Naive thymus-derived CD4-positive, alpha-beta T cell (primary cell): ENCODE measurements at regions of chr14 and their contacts with region 1.

Region 1: GRCh38 chr14:77097700-77098528 is at the start of gene CIPC:
- DNase-seq: peak; percentile 92 to 99 (median 98)
- ATAC-seq: peak; percentile 96
- H3K4me3 ChIP-seq: peak within 1 kb of the TSS; percentile 85
- H3K4me3 Mint-ChIP-seq: peak within 1 kb of the TSS; percentile 84 to 98 (median 90)
- H3K27ac ChIP-seq: peak within 1 kb of the TSS; percentile 97
- H3K27ac Mint-ChIP-seq: peak within 1 kb of the TSS; percentile 83 to 99 (median 97)
- H3K4me1 ChIP-seq: peaks cover 9 to 11% of the 10 kb centered on the region in 2 donors
- H3K4me1 Mint-ChIP-seq: peaks cover 24 to 55% (median 41%) of the 10 kb centered on the region in 7 donors
- H3K27me3 ChIP-seq: no peaks in the 10 kb centered on the region
- H3K27me3 Mint-ChIP-seq: peaks cover 0 to 3% (median 0%) of the 10 kb centered on the region in 5 donors
- total RNA-seq, gene CIPC: 5.5 to 14.2 (median 12.9) TPM

Region 2: DNA sequence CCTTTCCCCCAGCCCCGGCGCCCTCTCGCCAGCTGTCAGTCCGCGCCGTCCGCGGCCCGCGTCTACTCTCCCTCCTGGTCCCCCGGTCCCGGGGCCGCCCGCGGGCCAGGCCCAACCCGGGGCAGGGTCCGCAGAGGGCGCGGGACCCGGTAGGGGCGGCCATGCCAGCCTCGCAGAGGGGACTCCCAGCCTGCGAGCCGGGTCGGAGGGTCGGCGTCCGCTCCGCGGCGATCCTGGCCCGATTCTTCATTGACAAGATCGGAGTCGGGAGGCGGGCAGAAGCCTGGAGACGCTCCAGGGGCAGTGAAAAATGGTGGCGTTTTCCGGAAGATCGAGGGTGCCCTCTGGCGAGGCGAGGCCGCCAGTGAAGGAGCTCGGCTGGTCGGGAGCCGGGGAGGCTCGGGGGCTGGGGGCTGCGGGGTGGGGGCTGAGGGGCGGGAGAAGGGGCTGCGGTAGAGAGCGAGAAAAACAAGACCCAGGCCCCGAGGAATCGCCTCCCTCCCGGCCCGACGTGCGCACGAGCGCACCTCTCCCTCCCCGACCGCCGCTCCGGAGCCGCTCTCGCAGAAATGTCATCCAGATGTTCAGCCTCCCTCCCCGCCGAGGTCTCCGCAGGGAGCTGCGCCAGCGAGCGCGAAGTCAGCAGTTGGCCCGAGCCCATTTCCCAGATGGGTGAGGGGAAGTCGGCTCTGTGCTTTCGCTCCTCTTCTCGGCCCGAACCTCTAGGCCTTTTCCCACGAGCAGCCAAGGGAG is 1115.5 kb before region 1 on chr14:
- CTCF ChIA-PET with region 1: no interaction called
- POLR2A ChIA-PET with region 1: no interaction called
- intact Hi-C with region 1: loop called in 1 of 2 experiments (anchors 5 kb)
- DNase-seq: peak; percentile 69 to 83 (median 80)
- ATAC-seq: peak; percentile 83
- H3K4me3 ChIP-seq: peak overlapping the region; percentile 83
- H3K4me3 Mint-ChIP-seq: peak overlapping the region; percentile 80 to 99 (median 88)
- H3K27ac ChIP-seq: peak overlapping the region; percentile 84
- H3K27ac Mint-ChIP-seq: peak overlapping the region; percentile 58 to 97 (median 90)
- H3K4me1 ChIP-seq: peaks cover 18 to 32% of the 10 kb centered on the region in 2 donors
- H3K4me1 Mint-ChIP-seq: peaks cover 43 to 64% (median 56%) of the 10 kb centered on the region in 7 donors
- H3K27me3 ChIP-seq: no peaks in the 10 kb centered on the region
- H3K27me3 Mint-ChIP-seq: peaks cover 0 to 24% (median 0%) of the 10 kb centered on the region in 5 donors

Region 3: DNA sequence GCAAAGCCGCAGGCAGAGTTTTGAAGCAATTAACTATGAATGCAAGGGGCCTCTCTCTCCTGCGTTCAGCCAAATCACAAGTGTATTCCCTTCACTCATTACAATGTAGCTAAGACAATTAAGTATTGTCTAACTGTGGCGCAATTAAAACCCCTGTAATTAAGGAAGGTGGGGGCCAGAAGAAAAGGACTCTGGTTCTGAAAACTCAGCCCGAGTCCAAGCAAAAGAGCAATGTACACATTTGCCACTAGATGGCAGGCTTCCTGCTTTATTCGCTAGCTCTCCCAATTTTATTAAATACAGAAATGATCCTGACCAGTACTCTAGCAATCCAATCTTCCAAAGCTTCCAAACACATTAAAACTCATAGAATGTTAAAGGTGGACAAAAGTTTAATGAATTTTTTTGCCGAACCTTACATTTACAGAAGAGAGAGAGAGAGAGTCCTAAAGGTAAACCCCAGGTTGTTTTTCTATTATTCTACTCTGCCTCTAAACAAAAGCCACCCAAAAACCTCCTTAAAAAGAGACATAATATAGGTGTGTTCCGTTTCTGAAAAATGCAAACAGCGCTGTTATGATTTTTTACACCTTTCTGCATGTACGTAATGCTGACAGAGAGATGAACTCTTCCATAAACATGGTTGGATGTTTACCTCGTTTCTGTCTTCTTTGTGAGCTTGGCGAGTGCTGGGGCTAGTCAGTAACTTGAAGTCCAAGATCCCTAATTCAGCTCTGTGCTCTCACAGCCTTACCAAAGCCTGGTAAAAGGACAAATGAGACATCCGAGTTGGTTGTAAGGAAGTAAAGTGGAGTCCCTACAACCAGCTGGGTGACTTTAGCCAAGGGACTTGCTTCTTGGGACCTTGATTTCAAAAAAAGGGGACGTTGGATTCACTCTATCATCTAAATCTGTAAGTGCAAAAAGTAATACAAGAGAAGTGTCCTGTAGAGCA is 387.6 kb before region 1 on chr14:
- CTCF ChIA-PET with region 1: interaction called, 16 read pairs
- POLR2A ChIA-PET with region 1: interaction called, 3 read pairs
- intact Hi-C with region 1: loop called in 1 of 2 experiments (anchors 1 kb)
- DNase-seq: peak in 5 of 9 donors; percentile 11 to 44 (median 33)
- ATAC-seq: peak; percentile 67
- H3K4me3 ChIP-seq: no peak overlapping the region
- H3K4me3 Mint-ChIP-seq: no peak overlapping the region
- H3K27ac ChIP-seq: no peak overlapping the region
- H3K27ac Mint-ChIP-seq: no peak overlapping the region
- H3K4me1 ChIP-seq: no peaks in the 10 kb centered on the region
- H3K4me1 Mint-ChIP-seq: no peaks in the 10 kb centered on the region
- H3K27me3 ChIP-seq: no peaks in the 10 kb centered on the region
- H3K27me3 Mint-ChIP-seq: peaks cover 3 to 11% (median 9%) of the 10 kb centered on the region in 5 donors

Region 4: DNA sequence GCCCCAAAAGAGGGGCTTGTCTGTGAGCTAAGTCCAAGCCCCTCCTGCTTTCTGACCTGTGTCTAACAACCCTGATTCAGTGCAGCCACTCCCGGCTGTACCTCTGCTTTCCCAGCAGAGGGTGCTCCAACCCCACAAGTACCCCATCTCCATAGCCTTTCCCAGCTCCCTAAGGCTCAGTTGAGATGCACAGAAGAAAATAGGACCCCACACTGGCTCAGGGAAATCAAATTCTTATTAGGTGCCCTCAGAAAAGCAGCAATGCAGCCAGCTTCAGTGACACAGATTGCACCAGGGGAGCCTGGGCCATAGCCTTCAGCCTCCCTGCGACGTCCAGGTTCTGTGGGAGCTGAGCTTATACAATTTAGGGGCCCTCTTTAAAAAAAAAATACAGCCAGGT is 221.8 kb before region 1 on chr14:
- CTCF ChIA-PET with region 1: interaction called, 12 read pairs
- POLR2A ChIA-PET with region 1: interaction called, 3 read pairs
- intact Hi-C with region 1: loop called (anchors 1 kb)
- DNase-seq: peak in 7 of 9 donors; percentile 23 to 50 (median 37)
- ATAC-seq: peak; percentile 73
- H3K4me3 ChIP-seq: no peak overlapping the region
- H3K4me3 Mint-ChIP-seq: no peak overlapping the region
- H3K27ac ChIP-seq: no peak overlapping the region
- H3K27ac Mint-ChIP-seq: peak overlapping the region in 1 of 9 donors; percentile 69
- H3K4me1 ChIP-seq: no peaks in the 10 kb centered on the region
- H3K4me1 Mint-ChIP-seq: peaks cover 0 to 3% (median 0%) of the 10 kb centered on the region in 7 donors
- H3K27me3 ChIP-seq: no peaks in the 10 kb centered on the region
- H3K27me3 Mint-ChIP-seq: no peaks in the 10 kb centered on the region

Region 5: GRCh38 chr14:77028384-77029231 is 69.3 kb before region 1 on chr14 and contains the start of gene IRF2BPL:
- CTCF ChIA-PET with region 1: no interaction called
- POLR2A ChIA-PET with region 1: interaction called, 4 read pairs
- intact Hi-C with region 1: loop called (anchors 1 kb)
- DNase-seq: peak; percentile 90 to 96 (median 94)
- ATAC-seq: peak; percentile 82
- H3K4me3 ChIP-seq: peak within 1 kb of the TSS; percentile 81
- H3K4me3 Mint-ChIP-seq: peak within 1 kb of the TSS; percentile 93 to 99 (median 98)
- H3K27ac ChIP-seq: peak within 1 kb of the TSS; percentile 98
- H3K27ac Mint-ChIP-seq: peak within 1 kb of the TSS; percentile 97 to 100 (median 99)
- H3K4me1 ChIP-seq: peaks cover 43 to 57% of the 10 kb centered on the region in 2 donors
- H3K4me1 Mint-ChIP-seq: peaks cover 33 to 65% (median 58%) of the 10 kb centered on the region in 7 donors
- H3K27me3 ChIP-seq: no peaks in the 10 kb centered on the region
- H3K27me3 Mint-ChIP-seq: no peaks in the 10 kb centered on the region
- total RNA-seq, gene IRF2BPL: 30.2 to 45.2 (median 34.6) TPM

Region 6: GRCh38 chr14:77124345-77125280 is 26.7 kb after region 1 on chr14:
- CTCF ChIA-PET with region 1: interaction called, 9 read pairs
- POLR2A ChIA-PET with region 1: interaction called, 17 read pairs
- intact Hi-C with region 1: loop called (anchors 1 kb)
- DNase-seq: peak; percentile 49 to 77 (median 66)
- ATAC-seq: peak; percentile 91
- H3K4me3 ChIP-seq: peak overlapping the region; percentile 84
- H3K4me3 Mint-ChIP-seq: peak overlapping the region; percentile 70 to 83 (median 78)
- H3K27ac ChIP-seq: peak overlapping the region; percentile 56
- H3K27ac Mint-ChIP-seq: peak overlapping the region in 3 of 9 donors; percentile 67 to 86 (median 72)
- H3K4me1 ChIP-seq: peaks cover 16 to 48% of the 10 kb centered on the region in 2 donors
- H3K4me1 Mint-ChIP-seq: peaks cover 6 to 41% (median 28%) of the 10 kb centered on the region in 7 donors
- H3K27me3 ChIP-seq: no peaks in the 10 kb centered on the region
- H3K27me3 Mint-ChIP-seq: peaks cover 26 to 56% (median 33%) of the 10 kb centered on the region in 5 donors

Region 7: DNA sequence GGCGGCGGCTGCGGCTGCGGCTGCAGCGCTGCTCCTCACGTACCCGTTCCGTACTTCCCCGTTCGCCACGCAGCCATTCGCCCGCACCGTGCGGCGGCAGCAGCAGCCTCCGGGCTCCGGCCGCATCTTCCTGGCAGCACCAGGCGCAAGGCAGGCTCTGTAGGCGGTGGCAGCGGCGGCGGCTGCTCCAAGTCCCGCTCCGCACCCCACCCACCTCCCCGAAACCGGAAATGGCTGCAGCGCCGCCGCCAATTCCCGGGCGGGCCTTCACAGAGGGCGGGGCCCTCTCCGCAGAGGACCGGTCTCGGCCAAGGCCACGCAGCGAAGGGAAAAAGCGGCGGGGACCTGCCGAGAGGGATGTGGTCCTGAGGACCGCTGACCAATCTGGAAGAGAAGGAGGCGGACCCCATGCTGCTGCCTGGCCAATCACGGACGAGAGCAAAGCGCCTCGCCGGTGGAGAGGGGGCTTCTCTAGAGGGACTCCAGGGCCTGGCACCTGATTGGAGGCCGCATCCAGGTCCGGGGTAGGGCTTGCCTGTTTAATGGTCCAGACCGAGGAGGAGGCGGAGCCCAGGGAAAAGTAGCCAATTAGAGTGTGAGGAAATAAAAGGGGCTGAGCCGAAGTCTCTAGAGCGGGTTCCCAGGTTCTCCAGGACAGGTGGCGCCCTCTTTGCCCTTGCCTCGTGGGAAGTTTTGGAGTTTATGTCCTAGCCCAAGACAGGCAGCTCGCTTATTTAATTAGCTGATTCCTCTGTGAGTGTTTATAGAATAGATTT is 518.7 kb after region 1 on chr14 and contains the start of gene SPTLC2:
- CTCF ChIA-PET with region 1: no interaction called
- POLR2A ChIA-PET with region 1: no interaction called
- intact Hi-C with region 1: loop called (anchors 1 kb)
- DNase-seq: peak; percentile 78 to 99 (median 96)
- ATAC-seq: peak; percentile 98
- H3K4me3 ChIP-seq: peak within 1 kb of the TSS; percentile 55
- H3K4me3 Mint-ChIP-seq: peak within 1 kb of the TSS; percentile 85 to 97 (median 92)
- H3K27ac ChIP-seq: peak within 1 kb of the TSS; percentile 69
- H3K27ac Mint-ChIP-seq: peak within 1 kb of the TSS; percentile 45 to 91 (median 86)
- H3K4me1 ChIP-seq: peaks cover 4 to 5% of the 10 kb centered on the region in 2 donors
- H3K4me1 Mint-ChIP-seq: peaks cover 29 to 52% (median 40%) of the 10 kb centered on the region in 7 donors
- H3K27me3 ChIP-seq: no peaks in the 10 kb centered on the region
- H3K27me3 Mint-ChIP-seq: peaks cover 0 to 4% (median 0%) of the 10 kb centered on the region in 5 donors
- total RNA-seq, gene SPTLC2: 19.0 to 58.1 (median 25.7) TPM

Region 8: GRCh38 chr14:78164238-78164853 is 1066.4 kb after region 1 on chr14:
- CTCF ChIA-PET with region 1: no interaction called
- POLR2A ChIA-PET with region 1: no interaction called
- intact Hi-C with region 1: no loop called
- DNase-seq: no peak
- ATAC-seq: no peak
- H3K4me3 ChIP-seq: no peak overlapping the region
- H3K4me3 Mint-ChIP-seq: no peak overlapping the region
- H3K27ac ChIP-seq: no peak overlapping the region
- H3K27ac Mint-ChIP-seq: no peak overlapping the region
- H3K4me1 ChIP-seq: no peaks in the 10 kb centered on the region
- H3K4me1 Mint-ChIP-seq: no peaks in the 10 kb centered on the region
- H3K27me3 ChIP-seq: no peaks in the 10 kb centered on the region
- H3K27me3 Mint-ChIP-seq: peaks cover 12 to 58% (median 27%) of the 10 kb centered on the region in 5 donors